ENCODE measurements at regions of chr3 and their contacts with region 1.

Region 1: GRCh38 chr3:134625885-134626741 is 24.7 kb downstream of the KY start:
- DNase-seq: no peak
- H3K4me3 ChIP-seq: no peak overlapping the region
- H3K27ac ChIP-seq: no peak overlapping the region
- H3K4me1 ChIP-seq: peaks cover 0 to 13% (median under 1%) of the 10 kb centered on the region in 4 experiments
- H3K27me3 ChIP-seq: no peaks in the 10 kb centered on the region

Region 2: DNA sequence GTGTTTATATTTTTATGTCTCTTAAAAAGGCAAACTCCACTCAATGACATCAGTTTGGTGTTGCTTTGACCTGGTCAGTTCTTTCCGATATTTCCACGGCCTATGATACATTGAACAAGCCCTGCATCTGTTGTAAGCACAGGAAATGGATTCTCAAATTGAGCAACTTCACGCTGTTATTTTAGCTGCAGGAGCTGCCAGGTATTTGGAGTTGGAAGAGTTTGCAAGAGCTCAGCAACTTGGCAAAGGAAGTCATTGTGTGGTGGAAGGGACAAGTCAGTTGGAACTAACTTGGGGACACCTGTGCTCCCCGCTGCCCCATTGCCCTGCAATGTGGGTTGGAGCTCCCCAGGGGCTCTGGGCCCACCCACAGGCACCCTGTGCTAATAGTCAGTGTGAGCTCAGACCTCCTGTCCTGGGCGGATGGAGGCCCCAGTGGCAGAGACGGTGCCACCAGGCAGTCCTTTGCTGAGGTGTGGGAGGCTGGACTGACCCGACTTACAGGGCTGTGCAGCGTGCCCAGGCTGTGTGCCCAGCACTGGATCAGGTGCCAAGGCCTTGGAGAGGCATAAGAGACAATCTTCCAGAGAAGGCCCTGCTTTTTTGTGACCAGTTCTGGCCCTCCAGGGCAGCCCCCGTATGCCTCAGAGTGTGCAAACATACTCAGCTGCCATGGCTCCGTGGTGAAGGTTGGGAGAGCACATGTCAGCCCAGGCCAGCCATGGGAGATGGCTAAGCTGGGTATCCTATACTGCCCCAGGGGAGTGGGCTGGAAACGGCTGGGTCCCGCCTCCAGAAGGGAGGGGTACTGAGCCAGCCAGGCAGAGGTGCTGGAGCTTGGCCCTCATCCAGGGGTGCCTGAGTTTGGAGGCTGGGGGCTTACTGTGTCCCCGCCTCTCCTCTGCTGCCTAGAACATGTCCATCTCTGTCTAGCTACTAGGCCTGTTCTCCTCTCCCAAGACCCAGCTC is 18.8 kb before region 1 on chr3:
- CTCF ChIA-PET with region 1: interaction called, 27 read pairs
- POLR2A ChIA-PET with region 1: no interaction called
- DNase-seq: peak in 1 of 3 donors; percentile 19
- H3K4me3 ChIP-seq: no peak overlapping the region
- H3K27ac ChIP-seq: no peak overlapping the region
- H3K4me1 ChIP-seq: peaks cover 3 to 93% (median 60%) of the 10 kb centered on the region in 4 experiments
- H3K27me3 ChIP-seq: no peaks in the 10 kb centered on the region

Region 3: DNA sequence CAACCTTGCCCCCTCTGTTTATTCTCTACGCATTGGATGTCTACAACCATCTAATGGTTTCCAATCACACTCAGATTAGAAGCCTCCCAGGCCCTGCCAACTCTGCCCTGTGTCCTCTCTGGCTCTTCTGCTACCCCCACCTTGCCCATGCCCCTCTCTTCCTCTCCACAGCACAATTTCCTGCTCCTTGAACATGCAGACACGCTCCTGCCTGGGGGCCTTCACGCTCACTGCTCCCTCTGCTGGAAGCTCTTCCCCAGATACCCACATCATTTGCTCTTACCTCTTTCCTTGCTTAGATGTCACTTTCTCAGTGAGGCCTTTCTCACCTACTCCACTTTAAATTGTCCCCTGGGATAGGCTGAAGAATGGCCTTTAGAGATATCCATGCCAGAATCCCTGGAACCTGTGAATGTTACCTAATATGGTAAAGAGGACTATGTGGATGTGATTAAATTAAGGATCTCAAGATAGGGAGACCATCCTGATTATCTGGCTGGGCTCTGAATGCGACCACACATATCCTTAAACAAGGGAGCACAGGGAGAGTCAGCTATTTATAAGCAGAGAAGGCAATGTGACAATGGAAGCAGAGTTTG is 14.9 kb after region 1 on chr3:
- CTCF ChIA-PET with region 1: interaction called, 14 read pairs
- POLR2A ChIA-PET with region 1: no interaction called
- DNase-seq: peak; percentile 63 to 80 (median 72)
- H3K4me3 ChIP-seq: no peak overlapping the region
- H3K27ac ChIP-seq: no peak overlapping the region
- H3K4me1 ChIP-seq: peaks cover 0 to 2% (median 0%) of the 10 kb centered on the region in 4 experiments
- H3K27me3 ChIP-seq: no peaks in the 10 kb centered on the region

Measured in common myeloid progenitor, CD34-positive (primary cell).